HCT116 (cell line): ENCODE measurements at regions of chr13 and their contacts with region 1.

Region 1: DNA sequence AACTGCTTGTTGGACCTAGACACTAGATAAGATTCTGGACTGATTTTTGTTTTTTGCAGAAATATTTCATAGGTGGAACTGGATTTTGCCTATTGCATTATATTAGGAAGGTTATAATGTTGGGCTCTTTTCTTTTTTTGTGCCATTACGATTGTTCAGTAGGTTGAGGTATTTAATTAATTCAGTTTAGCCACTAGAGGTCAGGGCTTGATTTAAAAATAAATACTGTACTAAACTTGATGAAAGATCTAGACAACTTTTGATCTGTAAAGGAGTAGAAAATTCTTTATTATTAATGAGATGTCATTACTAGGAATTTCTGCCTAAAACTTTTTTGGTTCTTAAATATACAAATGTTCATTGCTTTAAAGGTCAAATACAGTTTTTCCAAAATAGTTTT is 15.2 kb upstream of the SUPT20H start:
- DNase-seq: peak; percentile 8
- ATAC-seq: peak; percentile 75
- H3K4me3 ChIP-seq: no peak overlapping the region
- H3K27ac ChIP-seq: no peak overlapping the region
- H3K4me1 ChIP-seq: no peaks in the 10 kb centered on the region
- H3K27me3 ChIP-seq: no peaks in the 10 kb centered on the region
- CTCF ChIP-seq: peak in 2 of 3 experiments; percentile 14 to 59; a peak in 2 of 6 replicates
- POLR2A ChIP-seq: no peak
- RAD21 ChIP-seq: peak; percentile 35; the same call in 1 of the 2 replicates

Region 2: DNA sequence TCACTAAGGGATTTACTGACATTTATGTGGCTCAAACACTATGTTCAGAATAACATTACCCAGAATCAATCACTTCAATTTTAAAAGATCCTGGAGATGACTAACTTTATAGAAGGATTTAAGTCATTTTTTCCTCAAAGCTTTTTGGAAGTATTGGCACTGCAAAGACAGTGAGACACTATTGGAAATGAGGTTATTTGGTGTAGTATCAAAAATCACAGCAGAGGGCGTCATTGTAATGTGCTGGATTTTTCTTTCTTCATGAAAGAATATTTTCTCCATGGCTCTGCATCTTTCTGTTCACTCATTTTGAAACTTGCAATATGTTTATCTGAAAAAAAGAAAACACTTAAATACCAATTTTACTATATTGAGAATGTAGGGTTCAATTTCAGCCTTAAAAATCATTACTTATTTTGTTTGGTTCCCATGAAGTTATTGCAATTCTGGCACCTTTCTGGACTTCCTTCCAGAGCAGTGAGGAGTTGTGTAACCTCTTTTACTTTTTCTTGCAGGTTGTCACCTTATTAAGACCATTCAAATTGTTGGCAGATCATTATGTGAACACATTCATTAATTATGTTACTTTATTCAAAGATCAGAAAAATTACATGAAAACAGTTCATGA is 34.5 kb after region 1 on chr13:
- CTCF ChIA-PET with region 1: no interaction called
- POLR2A ChIA-PET with region 1: no interaction called
- RAD21 ChIA-PET with region 1: no interaction called
- intact Hi-C with region 1: no loop called
- DNase-seq: no peak
- ATAC-seq: no peak
- H3K4me3 ChIP-seq: no peak overlapping the region
- H3K27ac ChIP-seq: no peak overlapping the region
- H3K4me1 ChIP-seq: no peaks in the 10 kb centered on the region
- H3K27me3 ChIP-seq: no peaks in the 10 kb centered on the region
- CTCF ChIP-seq: peak; percentile 7 to 65 (median 44); a peak in 5 of 6 replicates
- POLR2A ChIP-seq: no peak
- RAD21 ChIP-seq: peak; percentile 49

Region 3: DNA sequence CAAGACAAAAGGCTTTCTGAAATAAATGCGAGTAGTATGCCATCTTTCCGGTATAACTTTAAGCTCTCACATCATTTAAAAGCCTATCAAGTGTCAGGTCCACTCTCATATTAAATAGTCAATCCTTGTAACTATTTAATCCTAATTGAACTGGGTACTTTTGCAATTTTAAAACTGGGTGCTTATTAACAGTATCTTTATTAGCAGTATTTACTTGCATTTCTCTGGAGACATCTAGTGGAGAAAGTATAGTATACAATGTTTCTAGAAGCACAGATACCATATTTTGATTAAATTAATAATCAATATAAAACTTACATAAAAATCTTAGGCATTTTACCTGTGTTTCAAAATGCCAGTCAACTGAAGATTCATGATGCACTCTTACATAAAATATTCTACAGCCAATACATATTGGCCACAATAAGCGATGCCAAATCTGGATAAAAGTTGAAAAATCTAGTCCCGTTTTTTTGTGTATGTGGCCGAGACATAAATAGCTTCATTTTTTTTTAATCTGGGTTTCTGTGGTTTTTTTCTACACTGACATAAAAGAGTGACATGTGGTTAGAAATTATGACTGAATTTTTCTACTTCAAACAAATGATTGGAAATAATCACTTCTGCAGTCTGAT is 528.2 kb after region 1 on chr13:
- CTCF ChIA-PET with region 1: no interaction called
- POLR2A ChIA-PET with region 1: no interaction called
- RAD21 ChIA-PET with region 1: no interaction called
- intact Hi-C with region 1: loop called (anchors 2 kb)
- DNase-seq: no peak
- ATAC-seq: no peak
- H3K4me3 ChIP-seq: no peak overlapping the region
- H3K27ac ChIP-seq: no peak overlapping the region
- H3K4me1 ChIP-seq: no peaks in the 10 kb centered on the region
- H3K27me3 ChIP-seq: no peaks in the 10 kb centered on the region
- CTCF ChIP-seq: peak in 2 of 3 experiments; percentile 4 to 23; a peak in 1 of 6 replicates
- POLR2A ChIP-seq: no peak
- RAD21 ChIP-seq: peak; percentile 16; the same call in 1 of the 2 replicates

Region 4: DNA sequence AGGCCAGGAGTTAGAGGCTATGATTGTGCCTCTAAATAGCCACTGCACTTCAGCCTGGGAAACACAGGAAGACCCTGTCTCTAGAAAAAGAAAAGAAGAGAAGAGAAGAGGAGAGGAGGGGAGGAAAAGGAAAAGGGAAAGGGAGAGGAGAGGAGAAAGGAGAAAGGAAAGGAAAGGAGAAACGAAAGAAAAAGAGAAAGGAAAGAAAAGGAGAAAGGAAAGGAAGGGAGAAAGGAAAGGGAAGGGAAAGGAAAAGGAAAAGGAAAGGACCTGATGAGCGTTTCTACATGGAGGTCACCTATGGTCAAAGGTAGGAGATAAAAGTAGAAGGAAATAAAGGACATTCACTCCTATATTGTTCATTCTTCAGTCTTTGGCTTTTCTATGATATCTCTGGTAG is 904.0 kb after region 1 on chr13:
- CTCF ChIA-PET with region 1: no interaction called
- POLR2A ChIA-PET with region 1: no interaction called
- RAD21 ChIA-PET with region 1: no interaction called
- intact Hi-C with region 1: no loop called
- DNase-seq: no peak
- ATAC-seq: no peak
- H3K4me3 ChIP-seq: no peak overlapping the region
- H3K27ac ChIP-seq: no peak overlapping the region
- H3K4me1 ChIP-seq: no peaks in the 10 kb centered on the region
- H3K27me3 ChIP-seq: no peaks in the 10 kb centered on the region
- CTCF ChIP-seq: no peak
- POLR2A ChIP-seq: no peak
- RAD21 ChIP-seq: no peak

Region 5: GRCh38 chr13:38349390-38350113 is 1274.8 kb after region 1 on chr13 and contains the start of gene UFM1:
- CTCF ChIA-PET with region 1: no interaction called
- POLR2A ChIA-PET with region 1: no interaction called
- RAD21 ChIA-PET with region 1: no interaction called
- intact Hi-C with region 1: loop called (anchors 10 kb)
- DNase-seq: peak; percentile 93
- ATAC-seq: peak; percentile 94
- H3K4me3 ChIP-seq: peak within 1 kb of the TSS; percentile 84 to 93
- H3K27ac ChIP-seq: peak within 1 kb of the TSS; percentile 77
- H3K4me1 ChIP-seq: peaks cover 0 to 18% of the 10 kb centered on the region in 2 experiments; a peak in 3 of 4 replicates
- H3K27me3 ChIP-seq: no peaks in the 10 kb centered on the region
- CTCF ChIP-seq: no peak
- POLR2A ChIP-seq: no peak
- RAD21 ChIP-seq: no peak
- total RNA-seq, gene UFM1: 33.9 TPM

Region 6: GRCh38 chr13:38914070-38914469 is 1839.4 kb after region 1 on chr13:
- CTCF ChIA-PET with region 1: no interaction called
- POLR2A ChIA-PET with region 1: no interaction called
- RAD21 ChIA-PET with region 1: no interaction called
- intact Hi-C with region 1: loop called (anchors 1 kb)
- DNase-seq: no peak
- ATAC-seq: no peak
- H3K4me3 ChIP-seq: no peak overlapping the region
- H3K27ac ChIP-seq: no peak overlapping the region
- H3K4me1 ChIP-seq: no peaks in the 10 kb centered on the region
- H3K27me3 ChIP-seq: peaks cover 8% of the 10 kb centered on the region; the same call in 1 of the 2 replicates
- CTCF ChIP-seq: no peak
- POLR2A ChIP-seq: no peak
- RAD21 ChIP-seq: no peak